IMR-90 (cell line): ENCODE measurements at regions of chr11 and their contacts with region 1.

Region 1: GRCh38 chr11:30225642-30226041 is 5.2 kb upstream of the FSHB start:
- DNase-seq: no peak
- ATAC-seq: no peak
- H3K4me3 ChIP-seq: no peak overlapping the region
- H3K27ac ChIP-seq: no peak overlapping the region
- H3K4me1 ChIP-seq: no peaks in the 10 kb centered on the region
- H3K27me3 ChIP-seq: no peaks in the 10 kb centered on the region
- CTCF ChIP-seq: no peak
- POLR2A ChIP-seq: no peak
- RAD21 ChIP-seq: no peak

Region 2: DNA sequence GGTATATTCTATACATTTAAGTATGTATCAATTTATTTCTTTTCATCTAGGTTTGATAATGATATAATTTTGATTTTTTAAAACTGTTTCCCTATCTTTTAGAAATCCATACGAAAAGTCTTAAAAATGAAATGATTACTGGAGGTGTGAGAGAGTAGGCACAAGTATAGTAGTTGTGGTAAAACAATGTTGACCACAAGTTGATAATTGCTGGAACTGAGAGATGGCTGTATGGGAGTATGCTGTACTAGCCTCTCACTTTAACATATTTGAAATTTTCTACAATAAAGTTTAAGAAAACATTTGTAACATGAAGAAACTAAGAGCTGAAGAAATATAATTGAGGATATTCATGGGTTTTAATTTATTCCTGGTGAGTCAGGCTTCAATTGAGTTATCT is 35.2 kb after region 1 on chr11:
- CTCF ChIA-PET with region 1: no interaction called
- POLR2A ChIA-PET with region 1: no interaction called
- dilution Hi-C with region 1: no loop called
- in situ Hi-C with region 1: no loop called
- intact Hi-C with region 1: loop called (anchors 1 kb)
- DNase-seq: no peak
- ATAC-seq: no peak
- H3K4me3 ChIP-seq: no peak overlapping the region
- H3K27ac ChIP-seq: no peak overlapping the region
- H3K4me1 ChIP-seq: no peaks in the 10 kb centered on the region
- H3K27me3 ChIP-seq: no peaks in the 10 kb centered on the region
- CTCF ChIP-seq: no peak
- POLR2A ChIP-seq: no peak
- RAD21 ChIP-seq: no peak

Region 3: DNA sequence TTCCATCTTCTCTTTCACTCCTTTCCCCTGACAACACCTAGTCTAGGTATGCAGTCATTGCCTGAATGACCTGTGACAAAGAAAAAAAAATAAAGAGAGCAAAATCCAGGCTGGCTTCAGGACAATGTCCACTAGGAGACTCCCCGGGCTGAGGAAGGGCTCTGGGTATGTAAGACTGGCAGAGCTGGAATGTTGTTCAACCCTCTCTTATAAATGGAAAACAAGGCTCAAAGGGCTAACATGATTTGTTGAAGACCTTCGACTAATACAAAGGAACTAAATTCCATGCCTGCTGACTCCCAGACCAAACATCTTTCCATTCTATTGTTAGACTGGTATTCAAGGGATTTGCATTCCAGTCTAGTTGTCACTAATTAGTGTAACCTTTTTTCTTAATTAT is 219.4 kb after region 1 on chr11:
- CTCF ChIA-PET with region 1: no interaction called
- POLR2A ChIA-PET with region 1: no interaction called
- dilution Hi-C with region 1: no loop called
- in situ Hi-C with region 1: no loop called
- intact Hi-C with region 1: no loop called
- DNase-seq: no peak
- ATAC-seq: no peak
- H3K4me3 ChIP-seq: no peak overlapping the region
- H3K27ac ChIP-seq: no peak overlapping the region
- H3K4me1 ChIP-seq: no peaks in the 10 kb centered on the region
- H3K27me3 ChIP-seq: no peaks in the 10 kb centered on the region
- CTCF ChIP-seq: no peak
- POLR2A ChIP-seq: no peak
- RAD21 ChIP-seq: no peak